CD8-positive, alpha-beta T cell (primary cell): ENCODE measurements at regions of chr16 and their contacts with region 1.

Region 1: GRCh38 chr16:87492721-87493607 is at the start of gene ZCCHC14:
- DNase-seq: peak; percentile 97 to 99 (median 99)
- ATAC-seq: peak; percentile 92
- H3K4me3 ChIP-seq: peak within 1 kb of the TSS; percentile 70 to 71
- H3K4me3 Mint-ChIP-seq: peak within 1 kb of the TSS; percentile 89
- H3K27ac ChIP-seq: peak within 1 kb of the TSS; percentile 30 to 48
- H3K27ac Mint-ChIP-seq: peak within 1 kb of the TSS; percentile 82
- H3K4me1 ChIP-seq: peaks cover 41% of the 10 kb centered on the region
- H3K4me1 Mint-ChIP-seq: peaks cover 52% of the 10 kb centered on the region
- H3K27me3 ChIP-seq: no peaks in the 10 kb centered on the region
- H3K27me3 Mint-ChIP-seq: no peaks in the 10 kb centered on the region
- CTCF ChIP-seq: no peak
- total RNA-seq, gene ZCCHC14: 13.2 TPM

Region 2: GRCh38 chr16:86554917-86555703 is 937.9 kb before region 1 on chr16 and contains the start of gene MTHFSD:
- CTCF ChIA-PET with region 1: no interaction called
- POLR2A ChIA-PET with region 1: no interaction called
- intact Hi-C with region 1: loop called in 1 of 2 experiments (anchors 5 kb)
- DNase-seq: peak; percentile 92 to 99 (median 96)
- ATAC-seq: peak; percentile 94
- H3K4me3 ChIP-seq: peak within 1 kb of the TSS; percentile 87 to 98
- H3K4me3 Mint-ChIP-seq: peak within 1 kb of the TSS; percentile 93
- H3K27ac ChIP-seq: peak within 1 kb of the TSS; percentile 93 to 96
- H3K27ac Mint-ChIP-seq: peak within 1 kb of the TSS; percentile 96
- H3K4me1 ChIP-seq: peaks cover 16% of the 10 kb centered on the region
- H3K4me1 Mint-ChIP-seq: peaks cover 27% of the 10 kb centered on the region
- H3K27me3 ChIP-seq: no peaks in the 10 kb centered on the region
- H3K27me3 Mint-ChIP-seq: peaks cover 9% of the 10 kb centered on the region
- CTCF ChIP-seq: no peak
- total RNA-seq, gene MTHFSD: 6.2 to 7.8 TPM

Region 3: GRCh38 chr16:87316923-87317749 is 175.8 kb before region 1 on chr16 and contains the start of gene C16orf95:
- CTCF ChIA-PET with region 1: no interaction called
- POLR2A ChIA-PET with region 1: interaction called, 3 read pairs
- intact Hi-C with region 1: loop called (anchors 2 kb)
- DNase-seq: peak; percentile 93 to 99 (median 97)
- ATAC-seq: peak; percentile 89
- H3K4me3 ChIP-seq: peak within 1 kb of the TSS; percentile 92 to 99
- H3K4me3 Mint-ChIP-seq: peak within 1 kb of the TSS; percentile 94
- H3K27ac ChIP-seq: peak within 1 kb of the TSS; percentile 76 to 81
- H3K27ac Mint-ChIP-seq: peak within 1 kb of the TSS; percentile 95
- H3K4me1 ChIP-seq: peaks cover 8% of the 10 kb centered on the region
- H3K4me1 Mint-ChIP-seq: peaks cover 14% of the 10 kb centered on the region
- H3K27me3 ChIP-seq: no peaks in the 10 kb centered on the region
- H3K27me3 Mint-ChIP-seq: no peaks in the 10 kb centered on the region
- CTCF ChIP-seq: peak; percentile 42
- total RNA-seq, gene C16orf95: 0.76 to 1.2 TPM

Region 4: GRCh38 chr16:87464691-87465300 is 28.2 kb before region 1 on chr16:
- CTCF ChIA-PET with region 1: no interaction called
- POLR2A ChIA-PET with region 1: interaction called, 3 read pairs
- intact Hi-C with region 1: loop called in 1 of 2 experiments (anchors 2 kb)
- DNase-seq: peak in 4 of 9 experiments; percentile 23 to 47 (median 32)
- ATAC-seq: peak; percentile 43
- H3K4me3 ChIP-seq: no peak overlapping the region
- H3K4me3 Mint-ChIP-seq: peak overlapping the region; percentile 68
- H3K27ac ChIP-seq: no peak overlapping the region
- H3K27ac Mint-ChIP-seq: peak overlapping the region; percentile 90
- H3K4me1 ChIP-seq: peaks cover 33% of the 10 kb centered on the region
- H3K4me1 Mint-ChIP-seq: peaks cover 38% of the 10 kb centered on the region
- H3K27me3 ChIP-seq: no peaks in the 10 kb centered on the region
- H3K27me3 Mint-ChIP-seq: no peaks in the 10 kb centered on the region
- CTCF ChIP-seq: no peak

Region 5: GRCh38 chr16:87507351-87508069 is 14.5 kb after region 1 on chr16:
- CTCF ChIA-PET with region 1: no interaction called
- POLR2A ChIA-PET with region 1: no interaction called
- intact Hi-C with region 1: no loop called
- DNase-seq: no peak
- ATAC-seq: no peak
- H3K4me3 ChIP-seq: no peak overlapping the region
- H3K4me3 Mint-ChIP-seq: no peak overlapping the region
- H3K27ac ChIP-seq: no peak overlapping the region
- H3K27ac Mint-ChIP-seq: no peak overlapping the region
- H3K4me1 ChIP-seq: peaks cover 9% of the 10 kb centered on the region
- H3K4me1 Mint-ChIP-seq: peaks cover 9% of the 10 kb centered on the region
- H3K27me3 ChIP-seq: no peaks in the 10 kb centered on the region
- H3K27me3 Mint-ChIP-seq: peaks cover 34% of the 10 kb centered on the region
- CTCF ChIP-seq: no peak